HepG2 (cell line): ENCODE measurements at regions of chr2 and their contacts with region 1.

Region 1: DNA sequence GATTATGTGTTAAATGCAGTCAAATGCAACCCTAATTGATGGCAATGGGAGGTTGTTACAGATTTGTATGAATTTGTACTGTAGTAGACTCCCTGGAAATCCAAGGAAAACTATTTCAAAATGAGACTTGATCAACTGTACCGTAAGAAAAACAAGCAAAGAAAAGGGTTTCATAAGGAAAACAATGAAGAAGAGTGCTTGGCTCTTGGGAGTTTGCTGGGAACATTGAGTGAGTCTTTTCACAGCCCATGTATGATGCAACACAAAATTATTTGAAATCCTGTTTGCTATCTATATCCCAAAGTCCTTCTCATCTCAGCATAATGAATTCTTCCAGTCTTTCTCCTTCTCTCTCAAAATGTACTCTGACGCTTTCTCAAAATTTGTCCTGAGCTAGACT is 67.0 kb upstream of the OSR1 start:
- DNase-seq: no peak
- ATAC-seq: no peak
- H3K4me3 ChIP-seq: no peak overlapping the region
- H3K27ac ChIP-seq: no peak overlapping the region
- H3K4me1 ChIP-seq: no peaks in the 10 kb centered on the region; the same call in 1 of the 2 replicates
- H3K27me3 ChIP-seq: no peaks in the 10 kb centered on the region
- CTCF ChIP-seq: no peak
- EP300 ChIP-seq: no peak
- POLR2A ChIP-seq: no peak
- RAD21 ChIP-seq: no peak

Region 2: GRCh38 chr2:19146867-19147266 is 278.6 kb before region 1 on chr2:
- CTCF ChIA-PET with region 1: no interaction called
- POLR2A ChIA-PET with region 1: no interaction called
- in situ Hi-C with region 1: no loop called
- intact Hi-C with region 1: no loop called
- DNase-seq: no peak
- ATAC-seq: no peak
- H3K4me3 ChIP-seq: no peak overlapping the region
- H3K27ac ChIP-seq: no peak overlapping the region
- H3K4me1 ChIP-seq: peaks cover under 1% of the 10 kb centered on the region; the same call in 1 of the 2 replicates
- H3K27me3 ChIP-seq: no peaks in the 10 kb centered on the region
- CTCF ChIP-seq: no peak
- EP300 ChIP-seq: no peak
- POLR2A ChIP-seq: no peak
- RAD21 ChIP-seq: no peak

Region 3: GRCh38 chr2:19312949-19313348 is 112.5 kb before region 1 on chr2:
- CTCF ChIA-PET with region 1: no interaction called
- POLR2A ChIA-PET with region 1: no interaction called
- in situ Hi-C with region 1: no loop called
- intact Hi-C with region 1: no loop called
- DNase-seq: peak; percentile 51
- ATAC-seq: peak; percentile 98
- H3K4me3 ChIP-seq: no peak overlapping the region
- H3K27ac ChIP-seq: no peak overlapping the region
- H3K4me1 ChIP-seq: peaks cover 14% of the 10 kb centered on the region
- H3K27me3 ChIP-seq: no peaks in the 10 kb centered on the region
- CTCF ChIP-seq: no peak
- EP300 ChIP-seq: no peak
- POLR2A ChIP-seq: no peak
- RAD21 ChIP-seq: no peak

Region 4: DNA sequence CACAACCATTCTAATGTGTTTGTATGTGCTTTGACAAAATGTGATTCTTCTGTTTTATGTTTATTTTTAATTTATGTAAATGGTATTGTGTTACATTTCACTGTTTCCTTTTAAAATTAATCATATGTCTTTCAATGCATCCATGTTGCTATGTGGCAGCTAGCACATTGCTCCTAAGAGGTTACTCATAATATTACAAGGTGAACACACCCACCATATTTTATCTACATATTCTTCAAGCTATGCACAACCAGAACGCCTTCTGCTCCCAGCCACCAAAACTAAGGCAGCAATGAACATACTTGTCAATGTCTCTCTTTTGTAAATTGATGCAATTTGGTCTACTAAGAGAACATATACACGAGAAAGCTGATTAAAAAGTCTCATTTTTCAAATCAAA is 93.6 kb after region 1 on chr2:
- CTCF ChIA-PET with region 1: no interaction called
- POLR2A ChIA-PET with region 1: no interaction called
- in situ Hi-C with region 1: no loop called
- intact Hi-C with region 1: no loop called
- DNase-seq: no peak
- ATAC-seq: no peak
- H3K4me3 ChIP-seq: no peak overlapping the region
- H3K27ac ChIP-seq: no peak overlapping the region
- H3K4me1 ChIP-seq: peaks cover 17% of the 10 kb centered on the region; the same call in 1 of the 2 replicates
- H3K27me3 ChIP-seq: peaks cover 0 to 2% of the 10 kb centered on the region in 2 experiments; a peak in 1 of 5 replicates
- CTCF ChIP-seq: no peak
- EP300 ChIP-seq: no peak
- POLR2A ChIP-seq: no peak
- RAD21 ChIP-seq: no peak

Region 5: GRCh38 chr2:19598971-19599370 is 173.6 kb after region 1 on chr2:
- CTCF ChIA-PET with region 1: no interaction called
- POLR2A ChIA-PET with region 1: no interaction called
- in situ Hi-C with region 1: no loop called
- intact Hi-C with region 1: loop called (anchors 5 kb)
- DNase-seq: no peak
- ATAC-seq: no peak
- H3K4me3 ChIP-seq: no peak overlapping the region
- H3K27ac ChIP-seq: no peak overlapping the region
- H3K4me1 ChIP-seq: no peaks in the 10 kb centered on the region
- H3K27me3 ChIP-seq: peaks cover 0 to 1% of the 10 kb centered on the region in 2 experiments; a peak in 1 of 5 replicates
- CTCF ChIP-seq: no peak
- EP300 ChIP-seq: no peak
- POLR2A ChIP-seq: no peak
- RAD21 ChIP-seq: no peak